ENCODE measurements at regions of chr20 and their contacts with region 1.

Region 1: DNA sequence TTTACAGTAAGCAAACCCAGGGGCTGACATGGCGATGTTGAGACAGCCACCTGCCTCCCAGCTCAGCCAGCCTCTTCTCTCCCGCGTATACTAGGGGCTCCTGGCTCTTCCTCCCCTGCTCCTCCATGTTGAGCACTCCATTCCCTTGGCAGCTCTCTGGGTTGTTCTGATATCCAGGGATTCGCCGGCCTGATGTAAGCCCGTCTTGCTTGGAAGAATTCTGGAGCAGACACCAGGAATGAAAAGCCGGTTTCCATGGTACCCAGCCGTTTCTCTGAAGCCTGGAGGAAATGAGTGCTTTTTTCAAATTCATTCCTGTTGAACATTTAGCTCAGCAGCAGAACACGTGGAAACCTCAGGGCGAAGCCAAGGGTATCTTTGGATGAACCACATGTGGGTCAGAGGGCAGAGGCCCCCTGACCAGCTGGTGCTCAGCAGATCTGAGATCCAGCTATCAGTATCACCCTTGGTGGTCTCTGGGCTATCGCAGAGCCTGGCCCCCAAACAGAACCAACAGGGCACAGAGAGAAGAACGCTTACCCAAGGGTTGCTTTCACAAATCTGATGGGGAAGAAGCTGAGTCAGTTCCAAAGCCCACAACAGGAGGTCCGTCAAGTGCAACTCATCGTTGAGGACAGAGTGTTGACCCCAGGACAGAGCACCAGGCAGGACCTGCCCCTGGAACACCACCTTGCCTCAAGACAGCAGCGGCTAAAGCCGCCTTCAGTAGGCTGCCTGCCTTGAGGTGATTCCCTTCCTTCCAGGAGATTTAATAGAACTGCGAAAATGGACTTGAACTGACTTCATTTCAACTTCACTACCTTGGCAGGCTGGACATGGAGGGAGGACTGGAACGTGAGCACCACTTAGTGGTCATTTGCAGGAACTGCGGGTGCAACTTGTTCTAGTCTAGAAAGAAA is 96.1 kb upstream of the RIN2 start:
- DNase-seq: peak in 10 of 14 experiments; percentile 2 to 64 (median 12)
- ATAC-seq: no peak
- H3K4me3 ChIP-seq: no peak overlapping the region
- H3K4me3 Mint-ChIP-seq: no peak overlapping the region
- H3K27ac ChIP-seq: no peak overlapping the region
- H3K27ac Mint-ChIP-seq: no peak overlapping the region
- H3K4me1 ChIP-seq: no peaks in the 10 kb centered on the region
- H3K4me1 Mint-ChIP-seq: no peaks in the 10 kb centered on the region
- H3K27me3 ChIP-seq: peaks cover 0 to 4% of the 10 kb centered on the region in 2 experiments
- H3K27me3 Mint-ChIP-seq: peaks cover 44% of the 10 kb centered on the region
- CTCF ChIP-seq: peak; percentile 70

Region 2: GRCh38 chr20:18632196-18633009 is 1029.6 kb before region 1 on chr20:
- CTCF ChIA-PET with region 1: no interaction called
- POLR2A ChIA-PET with region 1: no interaction called
- intact Hi-C with region 1: loop called in 1 of 2 experiments (anchors 2 kb)
- DNase-seq: peak; percentile 6 to 57 (median 36)
- ATAC-seq: peak; percentile 62
- H3K4me3 ChIP-seq: no peak overlapping the region
- H3K4me3 Mint-ChIP-seq: no peak overlapping the region
- H3K27ac ChIP-seq: no peak overlapping the region
- H3K27ac Mint-ChIP-seq: no peak overlapping the region
- H3K4me1 ChIP-seq: no peaks in the 10 kb centered on the region
- H3K4me1 Mint-ChIP-seq: no peaks in the 10 kb centered on the region
- H3K27me3 ChIP-seq: no peaks in the 10 kb centered on the region
- H3K27me3 Mint-ChIP-seq: no peaks in the 10 kb centered on the region
- CTCF ChIP-seq: peak; percentile 74

Region 3: DNA sequence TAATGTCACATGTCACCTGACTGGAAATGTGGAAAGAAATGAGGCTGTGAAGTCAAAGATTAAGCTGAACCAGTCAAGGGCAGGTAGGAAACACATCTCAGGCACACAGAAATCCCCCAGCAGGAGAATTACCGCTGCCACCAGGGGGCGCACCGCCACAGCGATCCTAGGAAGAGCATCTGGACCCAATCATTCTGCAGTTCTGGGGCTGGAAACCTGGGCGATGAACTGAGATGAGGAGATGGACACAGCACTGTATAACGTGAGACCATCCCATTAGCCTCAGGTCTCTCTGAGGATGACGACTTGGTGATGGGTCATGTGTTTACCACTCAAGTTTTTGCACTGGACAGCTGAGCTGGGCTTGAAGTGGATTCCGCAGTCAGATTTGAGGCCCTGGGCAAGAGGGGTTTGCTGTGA is 456.0 kb before region 1 on chr20:
- CTCF ChIA-PET with region 1: no interaction called
- POLR2A ChIA-PET with region 1: no interaction called
- intact Hi-C with region 1: loop called in 1 of 2 experiments (anchors 5 kb)
- DNase-seq: peak in 13 of 14 experiments; percentile 24 to 65 (median 42)
- ATAC-seq: no peak
- H3K4me3 ChIP-seq: no peak overlapping the region
- H3K4me3 Mint-ChIP-seq: no peak overlapping the region
- H3K27ac ChIP-seq: no peak overlapping the region
- H3K27ac Mint-ChIP-seq: no peak overlapping the region
- H3K4me1 ChIP-seq: no peaks in the 10 kb centered on the region
- H3K4me1 Mint-ChIP-seq: no peaks in the 10 kb centered on the region
- H3K27me3 ChIP-seq: peaks cover 0 to 8% of the 10 kb centered on the region in 2 experiments
- H3K27me3 Mint-ChIP-seq: peaks cover 50% of the 10 kb centered on the region
- CTCF ChIP-seq: peak; percentile 67

Region 4: GRCh38 chr20:19934792-19935491 is 273.0 kb after region 1 on chr20:
- CTCF ChIA-PET with region 1: no interaction called
- POLR2A ChIA-PET with region 1: no interaction called
- intact Hi-C with region 1: no loop called
- DNase-seq: peak in 3 of 14 experiments; percentile 35 to 73 (median 62)
- ATAC-seq: no peak
- H3K4me3 ChIP-seq: peak overlapping the region; percentile 20
- H3K4me3 Mint-ChIP-seq: peak overlapping the region; percentile 0
- H3K27ac ChIP-seq: no peak overlapping the region
- H3K27ac Mint-ChIP-seq: no peak overlapping the region
- H3K4me1 ChIP-seq: peaks cover 15% of the 10 kb centered on the region
- H3K4me1 Mint-ChIP-seq: peaks cover 32% of the 10 kb centered on the region
- H3K27me3 ChIP-seq: peaks cover 0 to 3% of the 10 kb centered on the region in 2 experiments
- H3K27me3 Mint-ChIP-seq: peaks cover 12% of the 10 kb centered on the region
- CTCF ChIP-seq: no peak